ENCODE measurements at regions of chr3 and their contacts with region 1.

Region 1: DNA sequence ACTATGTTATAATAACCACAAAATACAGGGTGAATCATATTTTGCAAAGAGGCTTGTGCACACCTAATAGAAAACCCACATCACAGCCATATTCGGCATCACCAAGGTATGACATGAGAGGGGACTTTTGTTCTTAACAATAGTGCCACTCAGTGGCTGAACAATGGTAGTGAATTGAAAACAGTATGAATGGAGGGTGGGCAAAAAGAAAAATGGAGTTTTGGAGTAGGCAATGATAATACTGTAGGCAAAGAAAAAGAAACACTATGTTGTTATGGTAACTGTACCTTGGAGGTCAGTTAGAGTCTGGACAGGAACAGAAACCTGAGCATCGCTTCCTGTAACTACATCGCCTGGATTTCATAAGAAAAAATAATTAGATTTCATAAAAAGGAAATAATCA is 348.6 kb downstream of the PLCL2 start:
- DNase-seq: peak; percentile 24
- ATAC-seq: peak; percentile 84
- H3K4me3 ChIP-seq: no peak overlapping the region
- H3K27ac ChIP-seq: no peak overlapping the region
- H3K4me1 ChIP-seq: no peaks in the 10 kb centered on the region
- H3K27me3 ChIP-seq: no peaks in the 10 kb centered on the region
- CTCF ChIP-seq: peak; percentile 59

Region 2: GRCh38 chr3:16897254-16897926 is 336.0 kb before region 1 on chr3:
- CTCF ChIA-PET with region 1: no interaction called
- POLR2A ChIA-PET with region 1: no interaction called
- in situ Hi-C with region 1: no loop called
- intact Hi-C with region 1: loop called (anchors 10 kb)
- DNase-seq: no peak
- ATAC-seq: peak; percentile 80
- H3K4me3 ChIP-seq: peak overlapping the region; percentile 9 to 37; a peak in 3 of 4 replicates
- H3K27ac ChIP-seq: no peak overlapping the region
- H3K4me1 ChIP-seq: peaks cover 3% of the 10 kb centered on the region; the same call in 1 of the 2 replicates
- H3K27me3 ChIP-seq: no peaks in the 10 kb centered on the region
- CTCF ChIP-seq: no peak

Region 3: DNA sequence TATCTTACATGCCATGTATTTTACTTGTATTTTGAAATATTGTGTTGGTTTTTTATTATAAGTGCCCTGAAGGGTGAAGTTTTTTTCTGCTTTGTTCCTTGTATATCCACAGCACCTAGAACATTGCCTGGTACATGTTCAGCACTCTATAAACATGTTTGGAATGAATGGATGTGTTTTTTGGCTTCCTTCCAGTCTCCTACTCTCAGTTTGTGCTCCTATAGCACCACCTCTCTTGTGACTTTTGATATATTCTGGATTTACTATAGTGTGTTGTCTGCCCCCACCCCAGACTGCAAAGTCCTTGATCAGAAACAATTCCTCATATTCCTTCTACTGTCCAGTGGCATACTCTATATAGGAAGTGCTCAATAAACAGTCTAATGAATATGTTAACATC is 288.1 kb before region 1 on chr3:
- CTCF ChIA-PET with region 1: no interaction called
- POLR2A ChIA-PET with region 1: no interaction called
- in situ Hi-C with region 1: no loop called
- intact Hi-C with region 1: no loop called
- DNase-seq: no peak
- ATAC-seq: no peak
- H3K4me3 ChIP-seq: no peak overlapping the region
- H3K27ac ChIP-seq: no peak overlapping the region
- H3K4me1 ChIP-seq: no peaks in the 10 kb centered on the region
- H3K27me3 ChIP-seq: no peaks in the 10 kb centered on the region
- CTCF ChIP-seq: no peak

Region 4: DNA sequence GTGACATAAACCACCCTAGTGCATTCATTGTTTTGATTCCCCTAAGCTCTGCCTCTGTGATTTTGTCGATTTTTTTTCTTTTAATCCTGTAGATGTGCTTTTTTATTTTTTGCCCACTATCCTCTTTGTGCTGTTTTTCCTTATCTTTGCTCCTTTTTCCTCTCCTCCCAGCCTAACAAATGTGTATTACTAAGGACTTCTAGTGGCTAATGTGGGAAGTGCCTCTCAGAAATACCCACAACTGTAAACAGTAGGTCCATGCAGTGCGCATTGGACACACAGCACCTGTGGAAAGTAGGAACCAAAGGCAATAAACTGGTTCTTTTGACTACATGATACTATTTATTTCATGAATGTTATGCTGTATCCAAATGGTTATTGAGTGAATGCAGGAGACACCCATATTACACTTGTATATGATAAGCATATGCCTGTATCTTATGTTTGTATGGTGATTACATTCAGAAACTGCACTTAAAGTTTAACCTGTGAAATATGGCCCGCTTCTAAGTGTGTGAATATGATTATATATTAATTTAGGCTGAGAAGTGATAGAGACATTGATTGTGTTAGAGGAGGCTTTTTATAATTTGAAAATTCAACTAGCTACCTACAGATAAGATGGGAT is 200.9 kb before region 1 on chr3:
- CTCF ChIA-PET with region 1: no interaction called
- POLR2A ChIA-PET with region 1: no interaction called
- in situ Hi-C with region 1: no loop called
- intact Hi-C with region 1: loop called (anchors 10 kb)
- DNase-seq: no peak
- ATAC-seq: peak; percentile 84; the same call in 1 of the 2 replicates
- H3K4me3 ChIP-seq: no peak overlapping the region
- H3K27ac ChIP-seq: no peak overlapping the region
- H3K4me1 ChIP-seq: no peaks in the 10 kb centered on the region
- H3K27me3 ChIP-seq: no peaks in the 10 kb centered on the region
- CTCF ChIP-seq: peak; percentile 63; the same call in 1 of the 2 replicates

Region 5: DNA sequence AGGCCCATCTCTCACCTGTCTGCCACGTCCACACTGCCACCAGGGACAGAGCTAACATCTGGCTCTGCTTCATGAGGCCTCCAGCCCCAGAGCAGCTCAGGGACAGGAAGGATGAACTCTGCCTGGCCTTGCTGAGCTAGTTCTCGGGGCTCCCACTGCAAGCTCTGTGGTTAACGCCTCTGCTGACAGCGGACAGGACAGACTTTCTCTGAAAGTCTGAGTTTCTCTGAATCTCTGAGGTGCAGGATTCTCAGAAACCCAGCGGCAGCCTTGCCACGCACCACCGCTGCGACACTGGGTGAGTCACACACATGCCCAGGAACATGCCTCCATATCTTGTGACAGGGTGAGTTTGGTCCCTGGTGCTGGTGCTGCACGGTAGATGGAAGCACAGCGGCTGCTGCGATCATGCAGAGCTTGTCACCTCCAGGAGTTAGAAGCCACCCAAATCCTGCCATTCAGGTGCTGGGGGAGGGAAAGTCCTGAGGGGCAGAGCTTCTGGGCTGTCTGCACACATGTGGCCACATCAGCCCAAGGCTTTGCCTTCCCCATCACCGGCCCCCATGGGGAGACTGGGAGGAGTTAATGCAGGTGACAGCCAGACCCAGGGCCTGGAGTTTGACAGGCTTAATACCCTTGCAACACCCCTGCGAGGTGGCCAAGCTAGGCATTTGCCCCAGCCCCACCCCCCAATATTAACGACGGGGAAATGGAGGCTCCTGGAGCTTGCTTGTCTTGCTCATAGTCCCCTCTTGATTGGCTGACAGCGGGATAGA is 81.6 kb before region 1 on chr3:
- CTCF ChIA-PET with region 1: no interaction called
- POLR2A ChIA-PET with region 1: no interaction called
- in situ Hi-C with region 1: no loop called
- intact Hi-C with region 1: no loop called
- DNase-seq: no peak
- ATAC-seq: peak; percentile 48; the same call in 1 of the 2 replicates
- H3K4me3 ChIP-seq: no peak overlapping the region
- H3K27ac ChIP-seq: no peak overlapping the region
- H3K4me1 ChIP-seq: no peaks in the 10 kb centered on the region
- H3K27me3 ChIP-seq: no peaks in the 10 kb centered on the region
- CTCF ChIP-seq: no peak

Region 6: GRCh38 chr3:17355591-17355990 is 122.2 kb after region 1 on chr3:
- CTCF ChIA-PET with region 1: no interaction called
- POLR2A ChIA-PET with region 1: no interaction called
- in situ Hi-C with region 1: no loop called
- intact Hi-C with region 1: no loop called
- DNase-seq: no peak
- ATAC-seq: no peak
- H3K4me3 ChIP-seq: no peak overlapping the region
- H3K27ac ChIP-seq: no peak overlapping the region
- H3K4me1 ChIP-seq: no peaks in the 10 kb centered on the region
- H3K27me3 ChIP-seq: no peaks in the 10 kb centered on the region
- CTCF ChIP-seq: no peak